Right ventricle myocardium inferior (tissue), 1 donor: ENCODE measurements at regions of chr6 and their contacts with region 1.

Region 1: DNA sequence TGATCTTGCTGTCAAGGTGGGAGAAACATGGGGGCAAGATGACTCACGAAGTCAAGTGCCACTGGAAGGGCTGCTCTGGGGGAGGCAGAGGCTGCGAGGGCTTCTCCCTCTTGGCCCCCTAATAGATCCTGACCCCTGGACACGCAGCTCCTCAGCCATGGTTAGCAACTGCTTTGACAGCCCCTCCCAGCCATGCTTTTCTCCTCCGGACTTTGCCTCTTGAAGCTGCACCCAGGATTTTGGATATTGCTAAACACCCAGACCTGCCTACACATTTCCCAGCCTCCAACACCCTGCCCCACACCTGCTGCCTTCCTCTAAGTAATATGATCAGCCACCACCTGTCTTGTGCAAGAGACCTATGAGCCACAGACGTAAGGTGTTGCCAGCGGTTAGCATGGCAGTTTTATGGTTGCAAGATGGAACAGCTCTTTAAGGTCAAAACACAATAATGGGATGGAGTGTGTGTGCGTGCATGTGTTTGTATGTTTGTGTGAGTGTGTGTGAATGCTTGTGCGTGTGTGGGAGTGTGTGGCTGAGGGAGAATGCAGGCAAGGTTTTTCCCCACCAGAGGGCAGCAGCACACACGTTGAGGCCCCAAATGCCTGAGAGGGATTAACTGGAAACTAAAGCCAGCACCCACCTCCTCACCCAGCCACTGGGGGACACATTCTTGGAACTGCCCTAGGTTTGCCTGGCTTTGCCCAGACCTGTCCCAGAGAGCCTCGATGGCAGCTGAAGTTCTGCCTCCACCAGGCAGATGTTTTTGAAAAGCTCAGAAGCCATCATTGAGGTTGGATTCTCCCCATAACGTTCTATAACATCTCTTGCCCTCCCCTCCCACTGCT is 2.5 kb downstream of the IP6K3 start:
- DNase-seq: peak; percentile 68
- ATAC-seq: peak; percentile 21

Region 2: GRCh38 chr6:31952140-31952805 is 1792.0 kb before region 1 on chr6:
- intact Hi-C with region 1: no loop called
- DNase-seq: peak; percentile 78
- ATAC-seq: peak; percentile 55

Region 3: GRCh38 chr6:33711140-33712129 is 32.8 kb before region 1 on chr6 and contains the start of gene UQCC2:
- intact Hi-C with region 1: loop called (anchors 2 kb)
- DNase-seq: peak; percentile 99
- ATAC-seq: peak; percentile 98
- total RNA-seq, gene UQCC2: 215 TPM

Region 4: DNA sequence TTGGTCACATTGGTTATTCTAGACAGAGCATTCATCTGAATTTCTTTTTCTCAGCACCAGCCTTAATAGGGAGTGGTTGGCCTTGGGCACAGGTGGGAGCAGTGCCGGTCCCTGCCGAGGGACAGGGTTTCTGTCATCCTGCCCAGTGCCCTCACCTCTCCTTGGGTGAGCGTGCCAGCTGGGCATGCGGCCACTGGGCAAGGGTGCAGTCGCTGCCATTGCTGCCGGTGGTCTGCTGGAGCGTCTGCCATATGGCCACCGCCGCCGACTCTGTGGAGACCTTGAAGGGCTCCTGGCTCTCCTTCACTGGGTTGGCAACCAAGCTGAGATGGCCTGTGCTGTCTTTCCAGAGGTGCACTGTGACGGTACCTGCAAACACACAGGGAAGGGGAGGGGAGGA is 16.3 kb before region 1 on chr6:
- intact Hi-C with region 1: loop called (anchors 1 kb)
- DNase-seq: no peak
- ATAC-seq: peak; percentile 58

Region 5: DNA sequence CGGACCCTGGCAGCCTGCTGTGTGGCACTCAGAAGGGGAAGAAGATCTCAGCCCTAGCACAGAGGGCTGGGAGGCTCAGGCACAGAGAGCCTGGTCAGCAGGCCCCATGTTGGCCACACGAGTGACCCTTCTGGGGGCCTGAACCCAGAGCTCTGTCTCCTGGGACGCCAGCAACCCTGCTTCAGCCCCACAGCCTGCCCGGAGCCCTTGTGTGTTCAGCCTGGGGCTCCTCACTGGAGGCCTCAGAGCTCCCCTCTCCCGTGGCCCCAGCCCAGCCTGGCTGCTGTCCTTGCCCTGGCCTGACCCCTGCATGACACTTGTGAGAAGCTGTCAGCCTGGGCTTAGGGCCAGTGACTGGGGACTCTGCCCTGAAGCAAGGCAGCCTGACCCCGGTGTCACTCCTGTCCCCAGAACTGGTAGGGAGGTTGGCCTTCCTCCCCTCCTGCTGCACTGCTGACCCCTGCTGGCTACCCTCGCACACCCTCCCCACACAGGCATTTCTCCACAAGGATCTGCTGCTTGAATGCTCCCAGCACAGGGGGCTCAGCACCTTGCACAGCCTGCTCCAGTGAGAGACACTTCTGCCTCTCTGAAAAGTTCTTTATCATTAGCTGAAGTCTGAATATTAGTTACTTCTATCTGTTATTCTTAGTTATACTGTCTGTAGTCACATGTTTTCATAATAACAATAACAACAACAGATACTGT is 17.9 kb after region 1 on chr6:
- intact Hi-C with region 1: loop called (anchors 2 kb)
- DNase-seq: peak; percentile 91
- ATAC-seq: peak; percentile 95